A549 (cell line): ENCODE measurements at regions of chr10 and their contacts with region 1.

Region 1: DNA sequence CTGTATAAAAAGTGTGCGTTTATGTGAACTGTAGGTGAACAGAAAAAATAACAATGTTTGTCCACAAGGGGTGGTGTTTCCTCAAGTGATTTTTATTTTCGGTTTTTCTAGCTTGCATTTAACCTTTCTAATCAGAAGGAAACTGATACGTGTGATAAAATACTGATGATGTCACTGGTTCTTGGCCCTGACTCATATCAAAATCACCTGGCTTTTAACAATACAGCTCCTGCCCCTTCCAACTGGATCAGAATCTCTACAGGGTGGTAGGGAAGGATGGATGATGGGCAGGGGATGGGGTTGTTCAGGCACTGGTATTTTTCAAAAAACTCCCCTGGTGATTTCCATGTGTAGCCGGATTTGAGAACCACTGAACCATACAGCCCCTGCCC is 10.9 kb downstream of the NPFFR1 start:
- DNase-seq: peak; percentile 37 to 43
- ATAC-seq: peak; percentile 69 to 80; a peak in 4 of 6 replicates
- H3K4me3 ChIP-seq: no peak overlapping the region
- H3K27ac ChIP-seq: no peak overlapping the region
- H3K4me1 ChIP-seq: peaks cover under 1% of the 10 kb centered on the region; the same call in 2 of the 3 replicates
- CTCF ChIP-seq: peak; percentile 46; the same call in 2 of the 3 replicates
- EP300 ChIP-seq: no peak
- POLR2A ChIP-seq: no peak
- RAD21 ChIP-seq: no peak; a peak in 1 of 5 replicates

Region 2: DNA sequence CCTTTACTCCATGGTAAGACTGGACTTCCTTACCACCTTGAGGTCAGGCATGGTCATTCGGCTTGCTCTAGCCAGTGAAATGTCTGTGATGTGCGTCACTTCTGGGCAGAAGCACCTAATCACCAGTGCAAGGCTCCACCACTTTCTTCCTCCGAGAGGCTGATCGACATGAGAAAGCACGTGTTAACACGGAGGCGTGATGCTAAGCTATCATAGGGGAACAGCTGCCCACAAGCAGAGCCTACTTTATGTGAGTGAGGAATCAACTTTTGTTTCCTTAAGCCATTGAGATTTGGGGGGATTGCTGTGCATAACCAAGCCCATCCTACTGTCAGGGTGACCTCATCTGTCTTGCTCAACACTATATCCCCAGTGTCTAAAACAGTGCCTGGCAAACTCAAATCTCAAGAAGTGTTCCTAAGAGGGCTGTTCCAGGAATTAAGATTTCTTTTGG is 79.5 kb before region 1 on chr10:
- CTCF ChIA-PET with region 1: no interaction called
- POLR2A ChIA-PET with region 1: no interaction called
- DNase-seq: no peak
- ATAC-seq: peak in 1 of 2 experiments; percentile 16; a peak in 2 of 6 replicates
- H3K4me3 ChIP-seq: no peak overlapping the region
- H3K27ac ChIP-seq: peak overlapping the region in 1 of 2 experiments; percentile 55; a peak in 1 of 6 replicates
- H3K4me1 ChIP-seq: peaks cover 20% of the 10 kb centered on the region
- CTCF ChIP-seq: no peak
- EP300 ChIP-seq: no peak
- POLR2A ChIP-seq: no peak
- RAD21 ChIP-seq: no peak

Region 3: GRCh38 chr10:70227548-70228320 is 45.2 kb before region 1 on chr10:
- CTCF ChIA-PET with region 1: interaction called, 15 read pairs
- POLR2A ChIA-PET with region 1: no interaction called
- DNase-seq: peak in 1 of 2 experiments; percentile 63
- ATAC-seq: peak in 1 of 2 experiments; percentile 28; a peak in 1 of 6 replicates
- H3K4me3 ChIP-seq: no peak overlapping the region
- H3K27ac ChIP-seq: peak overlapping the region in 1 of 2 experiments; percentile 37; a peak in 1 of 6 replicates
- H3K4me1 ChIP-seq: peaks cover 35% of the 10 kb centered on the region
- CTCF ChIP-seq: no peak
- EP300 ChIP-seq: no peak
- POLR2A ChIP-seq: no peak
- RAD21 ChIP-seq: no peak

Region 4: DNA sequence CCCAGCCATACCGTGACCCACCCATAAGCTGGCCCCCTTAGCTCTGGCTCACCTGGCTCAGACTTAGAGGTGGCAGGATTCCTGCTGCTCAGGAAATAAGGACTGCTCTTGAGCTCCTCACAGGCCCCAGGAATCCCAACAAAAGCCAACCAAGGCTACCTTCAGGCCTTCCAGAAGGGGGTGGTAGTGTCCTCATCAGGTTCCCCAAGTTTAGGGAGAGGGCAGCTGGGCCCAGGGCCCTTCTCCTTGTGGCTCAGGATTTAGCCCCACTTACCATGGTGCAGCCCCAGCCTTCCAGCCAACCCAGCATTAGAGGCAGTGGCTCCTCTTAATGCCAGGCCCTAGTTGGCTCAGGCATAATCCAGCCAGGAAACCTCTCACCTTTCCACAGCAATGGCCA is 12.7 kb before region 1 on chr10:
- CTCF ChIA-PET with region 1: interaction called, 10 read pairs
- POLR2A ChIA-PET with region 1: no interaction called
- DNase-seq: no peak
- ATAC-seq: no peak
- H3K4me3 ChIP-seq: no peak overlapping the region
- H3K27ac ChIP-seq: no peak overlapping the region
- H3K4me1 ChIP-seq: no peaks in the 10 kb centered on the region
- CTCF ChIP-seq: no peak
- EP300 ChIP-seq: no peak
- POLR2A ChIP-seq: no peak
- RAD21 ChIP-seq: no peak

Region 5: DNA sequence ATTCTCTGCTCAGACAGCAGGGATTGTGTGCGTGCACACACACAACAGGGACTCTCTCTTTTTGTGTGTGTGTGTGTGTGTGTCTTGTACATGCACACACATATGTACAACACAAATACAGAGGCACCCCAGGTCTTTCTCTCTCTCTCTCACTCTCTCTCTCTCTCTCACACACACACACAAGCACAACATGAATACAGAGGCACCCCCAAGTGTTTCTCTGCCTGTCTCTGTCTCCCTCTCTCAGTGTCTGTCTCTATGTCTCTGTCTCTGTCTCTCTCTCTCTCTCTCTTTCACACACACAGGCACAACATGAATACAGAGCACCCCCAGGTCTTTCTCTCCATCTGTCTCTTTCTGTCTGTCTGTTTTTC is 10.1 kb after region 1 on chr10:
- CTCF ChIA-PET with region 1: interaction called, 11 read pairs
- POLR2A ChIA-PET with region 1: no interaction called
- DNase-seq: no peak
- ATAC-seq: peak in 1 of 2 experiments; percentile 30; a peak in 3 of 6 replicates
- H3K4me3 ChIP-seq: no peak overlapping the region; the same call in 2 of the 3 replicates
- H3K27ac ChIP-seq: no peak overlapping the region
- H3K4me1 ChIP-seq: 0 out of 3 replicates have a peak, but pooled peaks cover 3% of the 10 kb centered on the region
- CTCF ChIP-seq: no peak
- EP300 ChIP-seq: no peak
- POLR2A ChIP-seq: no peak
- RAD21 ChIP-seq: no peak